Activated T-helper 2 cell treated with anti-CD3 and anti-CD28 coated beads, Interferon-gamma antibody, Interleukin-2, Interleukin-4, amounts not matched to agents 10 μg/mL and 5 μg/mL and 100 μg/mL, durations not matched to agents 14 hours and 24 hours and 36 hours (primary cell): ENCODE measurements at regions of chr14 and their contacts with region 1.

Region 1: DNA sequence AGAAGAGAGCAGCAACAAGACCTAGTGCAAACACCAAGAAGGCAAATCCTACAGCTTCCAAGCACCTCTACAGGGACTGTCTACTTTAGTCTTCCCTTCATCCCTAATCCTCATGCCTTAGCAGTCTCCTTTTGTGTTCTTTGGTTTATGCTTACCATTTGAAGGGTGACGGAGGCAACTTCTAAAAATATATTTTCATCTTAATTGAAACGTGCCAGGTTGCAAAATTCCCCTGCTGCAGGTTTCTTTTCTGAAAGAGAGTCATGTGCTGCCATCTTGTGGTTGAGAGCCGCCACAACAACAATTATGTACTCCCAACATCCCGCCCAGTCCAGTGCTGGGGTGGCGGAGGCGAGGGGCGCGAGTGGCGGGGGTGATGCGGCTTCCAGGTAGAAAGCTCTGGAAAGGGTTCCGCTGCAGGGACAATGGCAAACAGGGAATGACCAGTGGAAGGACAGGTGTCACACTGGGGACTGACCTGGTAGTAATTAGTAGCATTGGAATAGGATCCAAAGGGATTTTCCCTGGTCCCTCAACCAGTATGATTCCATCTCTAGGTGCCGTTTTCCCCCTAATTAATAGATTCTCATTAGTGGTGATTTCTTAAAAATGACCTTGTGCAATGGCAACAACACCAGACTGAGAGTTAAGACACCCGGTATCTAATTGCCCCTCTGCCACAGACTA is 80.3 kb upstream of the GNG2 start:
- DNase-seq: peak; percentile 58
- H3K4me3 Mint-ChIP-seq: no peak overlapping the region
- H3K27ac Mint-ChIP-seq: no peak overlapping the region
- H3K4me1 Mint-ChIP-seq: peaks cover 12% of the 10 kb centered on the region
- H3K27me3 Mint-ChIP-seq: peaks cover 42% of the 10 kb centered on the region

Region 2: GRCh38 chr14:51283402-51284085 is 496.6 kb before region 1 on chr14:
- intact Hi-C with region 1: loop called (anchors 1 kb)
- DNase-seq: no peak
- H3K4me3 Mint-ChIP-seq: no peak overlapping the region
- H3K27ac Mint-ChIP-seq: no peak overlapping the region
- H3K4me1 Mint-ChIP-seq: no peaks in the 10 kb centered on the region
- H3K27me3 Mint-ChIP-seq: no peaks in the 10 kb centered on the region

Region 3: DNA sequence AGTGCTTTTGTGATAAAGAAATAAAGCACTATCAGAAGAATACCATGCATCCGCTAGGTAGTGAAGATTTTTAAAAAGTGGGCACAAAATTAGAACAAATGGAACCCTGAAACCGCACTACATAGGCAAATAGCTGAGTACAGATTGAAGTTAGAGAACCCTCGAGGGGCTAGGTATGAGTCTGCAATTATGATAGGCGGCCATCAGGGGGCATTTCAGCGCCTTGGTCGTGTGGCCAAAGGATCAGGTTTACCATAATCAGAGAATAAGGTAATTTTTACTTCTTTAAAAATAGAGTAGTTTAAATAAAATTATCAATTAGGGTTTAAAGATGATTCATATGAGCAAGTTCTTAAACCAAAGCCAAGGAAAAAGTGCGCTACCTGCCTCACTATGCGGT is 410.3 kb before region 1 on chr14:
- intact Hi-C with region 1: loop called (anchors 5 kb)
- DNase-seq: no peak
- H3K4me3 Mint-ChIP-seq: no peak overlapping the region
- H3K27ac Mint-ChIP-seq: no peak overlapping the region
- H3K4me1 Mint-ChIP-seq: no peaks in the 10 kb centered on the region
- H3K27me3 Mint-ChIP-seq: peaks cover 6% of the 10 kb centered on the region

Region 4: DNA sequence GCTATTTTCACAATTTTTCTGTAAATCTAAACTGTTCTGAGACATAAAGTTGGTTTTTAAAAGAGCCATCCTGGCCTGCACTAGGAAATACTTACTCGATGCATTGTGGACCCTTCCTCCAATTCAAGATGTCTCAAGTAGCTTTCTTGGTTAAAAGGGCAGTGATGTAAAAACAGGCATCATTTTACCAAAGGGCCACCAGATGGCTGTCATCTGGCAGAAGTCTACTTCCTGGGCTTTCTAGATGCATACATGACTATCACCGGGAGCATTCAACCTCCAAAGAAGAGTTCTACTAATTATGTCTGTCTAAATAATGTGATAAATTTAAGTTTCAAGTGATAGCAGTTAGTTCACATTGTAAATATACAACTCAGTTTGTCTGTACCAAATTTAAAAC is 225.2 kb before region 1 on chr14:
- intact Hi-C with region 1: loop called (anchors 10 kb)
- DNase-seq: no peak
- H3K4me3 Mint-ChIP-seq: no peak overlapping the region
- H3K27ac Mint-ChIP-seq: no peak overlapping the region
- H3K4me1 Mint-ChIP-seq: no peaks in the 10 kb centered on the region
- H3K27me3 Mint-ChIP-seq: peaks cover 20% of the 10 kb centered on the region

Region 5: DNA sequence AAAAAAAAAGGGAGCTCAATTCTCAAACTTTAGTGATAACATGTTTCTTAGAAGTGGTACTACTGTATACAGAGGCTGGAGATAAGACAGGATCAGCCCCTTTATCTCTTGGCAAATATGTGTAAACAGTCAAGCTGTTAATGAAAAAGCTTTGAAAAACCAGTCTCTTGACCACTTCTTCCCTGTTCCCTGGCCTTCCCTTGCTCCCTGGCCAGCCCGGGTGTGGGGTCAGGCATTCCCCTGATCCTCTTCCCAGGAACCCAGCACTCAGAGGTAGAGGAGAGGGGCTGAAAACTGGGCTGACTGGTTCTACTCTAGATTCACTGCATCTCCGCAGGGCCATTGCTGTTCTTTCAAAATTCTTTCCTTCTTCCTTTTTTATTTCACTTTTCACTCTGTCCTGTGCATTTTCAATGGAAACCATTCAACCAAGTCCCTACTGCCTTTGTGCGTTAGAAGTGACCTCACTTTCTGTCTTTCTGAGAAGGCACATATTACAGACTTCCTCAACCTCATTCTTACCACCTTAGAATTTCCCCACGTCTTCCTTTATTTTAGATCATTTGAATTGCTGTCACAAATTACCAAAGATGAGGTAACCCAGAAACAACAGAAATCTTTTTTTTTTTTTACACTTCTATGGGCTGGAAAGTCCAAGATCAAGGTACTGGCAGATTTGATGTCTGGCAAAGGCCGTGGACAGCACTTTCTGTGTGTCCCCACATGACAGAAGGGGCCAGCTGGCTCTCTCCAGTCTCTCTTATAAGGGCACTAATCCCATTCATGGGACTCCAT is 86.0 kb after region 1 on chr14:
- intact Hi-C with region 1: loop called (anchors 5 kb)
- DNase-seq: no peak
- H3K4me3 Mint-ChIP-seq: no peak overlapping the region
- H3K27ac Mint-ChIP-seq: no peak overlapping the region
- H3K4me1 Mint-ChIP-seq: peaks cover 35% of the 10 kb centered on the region
- H3K27me3 Mint-ChIP-seq: no peaks in the 10 kb centered on the region

Region 6: GRCh38 chr14:51979088-51979709 is 199.1 kb after region 1 on chr14:
- intact Hi-C with region 1: loop called (anchors 5 kb)
- DNase-seq: peak; percentile 67
- H3K4me3 Mint-ChIP-seq: no peak overlapping the region
- H3K27ac Mint-ChIP-seq: no peak overlapping the region
- H3K4me1 Mint-ChIP-seq: peaks cover 10% of the 10 kb centered on the region
- H3K27me3 Mint-ChIP-seq: no peaks in the 10 kb centered on the region

Region 7: DNA sequence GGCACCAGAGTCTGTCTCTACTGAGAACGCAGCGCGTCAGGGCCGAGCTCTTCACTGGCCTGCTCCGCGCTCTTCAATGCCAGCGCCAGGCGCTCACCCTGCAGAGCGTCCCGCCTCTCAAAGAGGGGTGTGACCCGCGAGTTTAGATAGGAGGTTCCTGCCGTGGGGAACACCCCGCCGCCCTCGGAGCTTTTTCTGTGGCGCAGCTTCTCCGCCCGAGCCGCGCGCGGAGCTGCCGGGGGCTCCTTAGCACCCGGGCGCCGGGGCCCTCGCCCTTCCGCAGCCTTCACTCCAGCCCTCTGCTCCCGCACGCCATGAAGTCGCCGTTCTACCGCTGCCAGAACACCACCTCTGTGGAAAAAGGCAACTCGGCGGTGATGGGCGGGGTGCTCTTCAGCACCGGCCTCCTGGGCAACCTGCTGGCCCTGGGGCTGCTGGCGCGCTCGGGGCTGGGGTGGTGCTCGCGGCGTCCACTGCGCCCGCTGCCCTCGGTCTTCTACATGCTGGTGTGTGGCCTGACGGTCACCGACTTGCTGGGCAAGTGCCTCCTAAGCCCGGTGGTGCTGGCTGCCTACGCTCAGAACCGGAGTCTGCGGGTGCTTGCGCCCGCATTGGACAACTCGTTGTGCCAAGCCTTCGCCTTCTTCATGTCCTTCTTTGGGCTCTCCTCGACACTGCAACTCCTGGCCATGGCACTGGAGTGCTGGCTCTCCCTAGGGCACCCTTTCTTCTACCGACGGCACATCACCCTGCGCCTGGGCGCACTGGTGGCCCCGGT is 487.5 kb after region 1 on chr14 and contains the start of gene PTGDR:
- intact Hi-C with region 1: no loop called
- DNase-seq: no peak
- H3K4me3 Mint-ChIP-seq: peak within 1 kb of the TSS; percentile 87
- H3K27ac Mint-ChIP-seq: no peak within 1 kb of the TSS
- H3K4me1 Mint-ChIP-seq: peaks cover 50% of the 10 kb centered on the region
- H3K27me3 Mint-ChIP-seq: peaks cover 48% of the 10 kb centered on the region
- total RNA-seq, gene PTGDR: 0.07 and 0.25 TPM in 2 replicates